Calu3 (cell line): ENCODE measurements at regions of chr4 and their contacts with region 1.

Region 1: DNA sequence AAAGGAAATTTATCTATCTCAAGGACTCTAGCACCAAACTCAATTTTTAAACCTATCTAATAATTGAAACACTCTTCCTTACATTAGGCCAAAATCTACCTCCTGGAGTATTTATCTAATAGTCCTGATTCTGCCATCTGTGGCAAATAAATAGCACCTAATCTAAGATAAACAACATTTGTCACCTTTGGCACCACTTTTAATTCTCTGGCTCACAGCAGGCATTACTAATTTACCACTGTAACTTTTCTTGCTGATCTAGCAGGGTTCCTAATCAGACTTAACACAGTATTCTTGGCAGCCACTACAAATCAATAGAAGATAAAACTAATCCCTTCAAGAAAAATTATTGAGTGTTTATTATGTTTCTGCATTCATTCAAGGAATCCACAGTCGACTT is 161.1 kb downstream of the KCTD8 start:
- DNase-seq: no peak
- H3K4me3 Mint-ChIP-seq: no peak overlapping the region
- H3K27ac Mint-ChIP-seq: no peak overlapping the region
- H3K4me1 Mint-ChIP-seq: no peaks in the 10 kb centered on the region
- H3K27me3 Mint-ChIP-seq: no peaks in the 10 kb centered on the region
- CTCF ChIP-seq: no peak

Region 2: GRCh38 chr4:43399730-43400129 is 887.8 kb before region 1 on chr4:
- CTCF ChIA-PET with region 1: no interaction called
- intact Hi-C with region 1: loop called (anchors 10 kb)
- DNase-seq: no peak
- H3K4me3 Mint-ChIP-seq: no peak overlapping the region
- H3K27ac Mint-ChIP-seq: no peak overlapping the region
- H3K4me1 Mint-ChIP-seq: no peaks in the 10 kb centered on the region
- H3K27me3 Mint-ChIP-seq: no peaks in the 10 kb centered on the region
- CTCF ChIP-seq: no peak